ENCODE measurements at regions of chr5 and their contacts with region 1.

Region 1: DNA sequence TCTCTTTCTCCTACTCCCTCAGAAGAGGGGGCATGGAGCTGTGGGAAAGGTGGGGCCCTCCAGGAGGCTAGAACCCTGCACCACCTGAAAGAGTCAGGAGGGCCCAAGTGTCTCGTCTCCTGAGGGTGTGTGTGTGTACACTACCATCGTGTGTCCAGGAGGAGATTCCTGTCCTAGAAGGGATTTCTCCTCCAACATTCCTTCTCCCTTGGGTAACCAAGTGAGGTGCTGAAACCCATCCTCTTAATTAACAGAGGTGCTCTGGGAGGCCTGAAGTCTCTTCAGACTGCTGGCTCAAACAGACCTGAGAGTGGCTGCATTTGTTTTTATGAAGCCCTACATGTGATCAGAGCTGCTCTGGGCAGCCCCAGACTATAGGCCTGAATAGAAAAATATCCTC is 61.1 kb upstream of the FAM169A start:
- DNase-seq: no peak
- ATAC-seq: no peak
- H3K4me3 ChIP-seq: no peak overlapping the region
- H3K27ac ChIP-seq: no peak overlapping the region
- H3K4me1 ChIP-seq: no peaks in the 10 kb centered on the region
- H3K27me3 ChIP-seq: no peaks in the 10 kb centered on the region
- CTCF ChIP-seq: no peak

Region 2: GRCh38 chr5:74889523-74890105 is 37.7 kb before region 1 on chr5:
- intact Hi-C with region 1: no loop called
- DNase-seq: no peak
- ATAC-seq: no peak
- H3K4me3 ChIP-seq: no peak overlapping the region
- H3K27ac ChIP-seq: no peak overlapping the region
- H3K4me1 ChIP-seq: no peaks in the 10 kb centered on the region
- H3K27me3 ChIP-seq: no peaks in the 10 kb centered on the region
- CTCF ChIP-seq: no peak

Region 3: DNA sequence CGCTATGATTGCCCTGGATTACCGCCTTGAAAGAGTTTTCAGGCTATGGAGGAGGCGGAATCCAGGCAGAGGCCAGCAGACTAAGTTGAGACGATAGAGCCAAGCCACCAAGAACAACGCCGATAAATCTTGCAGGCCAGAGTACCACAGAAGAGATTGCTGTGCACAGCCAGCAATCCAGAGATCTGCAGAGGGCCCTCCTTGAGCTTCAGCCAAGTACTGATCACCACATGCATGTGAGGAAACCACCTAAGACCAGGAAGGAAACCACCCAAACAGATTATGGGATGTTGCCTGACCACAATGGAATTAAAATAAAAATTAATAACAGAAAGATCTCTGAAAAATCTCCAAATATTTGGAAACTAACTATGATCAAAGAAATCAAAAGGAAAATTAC is 50.1 kb after region 1 on chr5:
- intact Hi-C with region 1: no loop called
- DNase-seq: no peak
- ATAC-seq: peak in 1 of 4 donors; percentile 44
- H3K4me3 ChIP-seq: no peak overlapping the region
- H3K27ac ChIP-seq: no peak overlapping the region
- H3K4me1 ChIP-seq: no peaks in the 10 kb centered on the region
- H3K27me3 ChIP-seq: no peaks in the 10 kb centered on the region
- CTCF ChIP-seq: no peak

Region 4: DNA sequence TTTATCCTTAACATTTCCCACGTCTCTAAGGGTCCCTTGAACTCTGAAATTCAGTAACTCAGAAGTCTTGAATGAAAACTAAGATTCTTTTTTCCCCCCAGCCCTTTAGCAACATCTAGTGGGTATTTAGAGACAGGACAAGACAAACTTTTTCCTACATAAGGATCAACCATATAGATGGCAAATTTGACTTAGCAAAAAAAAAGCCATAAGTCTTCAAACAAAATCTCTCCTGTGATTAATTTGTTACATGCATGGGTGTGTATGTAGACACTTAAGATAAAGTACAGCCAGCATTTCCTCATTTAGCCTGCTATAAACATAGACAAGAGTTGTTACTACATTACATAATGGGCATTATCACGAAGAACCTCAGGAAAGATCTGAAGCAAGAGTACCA is 338.4 kb after region 1 on chr5:
- intact Hi-C with region 1: loop called in 1 of 3 experiments (anchors 10 kb)
- DNase-seq: no peak
- ATAC-seq: peak in 3 of 4 donors; percentile 56 to 70 (median 67)
- H3K4me3 ChIP-seq: no peak overlapping the region
- H3K27ac ChIP-seq: no peak overlapping the region
- H3K4me1 ChIP-seq: no peaks in the 10 kb centered on the region
- H3K27me3 ChIP-seq: no peaks in the 10 kb centered on the region
- CTCF ChIP-seq: peak in 2 of 4 donors; percentile 28 to 47

Region 5: DNA sequence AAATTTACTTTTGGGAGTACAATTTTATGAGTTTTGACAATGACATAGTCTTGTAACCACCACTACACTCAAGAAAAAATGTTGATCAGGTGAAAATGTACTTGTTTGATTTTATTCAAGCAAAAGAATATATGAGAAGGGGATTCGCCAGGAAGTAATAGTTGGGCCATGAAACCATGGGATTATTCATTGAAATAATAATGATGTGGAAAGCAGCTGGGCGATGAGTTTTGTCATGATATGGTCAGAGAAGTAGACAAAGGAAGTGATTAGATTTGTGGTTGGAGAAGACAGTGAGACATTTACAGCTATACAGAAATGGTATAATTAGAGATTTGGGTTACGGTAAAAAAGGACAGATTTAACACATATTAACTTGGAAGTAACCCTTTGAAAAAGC is 420.9 kb after region 1 on chr5:
- intact Hi-C with region 1: no loop called
- DNase-seq: no peak
- ATAC-seq: no peak
- H3K4me3 ChIP-seq: no peak overlapping the region
- H3K27ac ChIP-seq: no peak overlapping the region
- H3K4me1 ChIP-seq: no peaks in the 10 kb centered on the region
- H3K27me3 ChIP-seq: no peaks in the 10 kb centered on the region
- CTCF ChIP-seq: no peak

Measured in pancreas (tissue), 10 donors.